ENCODE measurements at regions of chr6 and their contacts with region 1.

Region 1: DNA sequence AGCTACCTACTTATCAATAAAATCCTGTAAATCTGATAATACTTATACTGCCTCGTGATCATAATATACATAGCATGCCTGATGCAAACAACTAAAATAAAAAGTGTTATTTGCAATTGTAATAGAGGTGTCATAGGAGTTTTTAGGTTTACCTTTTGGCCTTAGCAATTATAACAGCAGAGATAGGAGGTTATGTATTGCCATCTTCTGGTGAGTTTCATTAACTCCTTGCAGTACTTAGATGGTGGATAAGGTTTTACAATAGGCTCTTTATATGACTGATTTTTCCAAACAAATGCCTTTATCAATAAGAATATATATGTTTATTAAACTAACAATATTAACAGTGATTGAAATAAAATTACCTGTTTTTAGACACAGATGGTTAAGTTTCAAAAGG is 27.8 kb upstream of the MYCT1 start:
- H3K4me3 ChIP-seq: no peak overlapping the region
- H3K27ac ChIP-seq: no peak overlapping the region
- H3K4me1 ChIP-seq: no peaks in the 10 kb centered on the region
- CTCF ChIP-seq: peak; percentile 41; the same call in 1 of the 2 replicates

Region 2: DNA sequence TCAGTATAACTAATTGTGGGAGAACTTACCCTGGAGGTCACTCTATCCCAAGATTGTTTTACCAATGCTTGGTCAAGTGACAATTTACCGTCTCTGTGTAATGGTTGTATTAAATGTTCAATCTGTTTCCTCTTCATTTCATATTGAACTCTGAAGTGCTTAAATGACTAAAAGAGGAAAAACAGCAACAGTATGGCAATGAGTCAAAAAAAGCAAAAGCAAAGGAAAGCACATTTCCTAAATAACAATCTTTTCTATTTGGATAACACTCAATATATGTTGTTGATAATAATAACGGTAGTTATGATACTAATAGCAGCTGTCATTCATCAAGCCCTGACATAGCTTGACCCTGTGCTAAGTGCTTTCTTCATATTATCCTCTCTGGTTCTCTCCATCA is 185.1 kb before region 1 on chr6:
- CTCF ChIA-PET with region 1: interaction called, 36 read pairs
- POLR2A ChIA-PET with region 1: no interaction called
- H3K4me3 ChIP-seq: no peak overlapping the region
- H3K27ac ChIP-seq: no peak overlapping the region
- H3K4me1 ChIP-seq: no peaks in the 10 kb centered on the region
- CTCF ChIP-seq: no peak